Activated CD8-positive, alpha-beta memory T cell treated with anti-CD3 and anti-CD28 coated beads, Interleukin-2, amount 10 ng/mL, durations not matched to agents 7 days and 5 days (primary cell): ENCODE measurements at regions of chr10 and their contacts with region 1.

Region 1: GRCh38 chr10:100046021-100046486 is 35.6 kb downstream of the CPN1 start:
- DNase-seq: peak; percentile 85
- ATAC-seq: peak; percentile 78
- H3K4me3 Mint-ChIP-seq: no peak overlapping the region
- H3K27ac Mint-ChIP-seq: no peak overlapping the region
- H3K4me1 Mint-ChIP-seq: no peaks in the 10 kb centered on the region
- H3K27me3 Mint-ChIP-seq: peaks cover 7% of the 10 kb centered on the region

Region 2: DNA sequence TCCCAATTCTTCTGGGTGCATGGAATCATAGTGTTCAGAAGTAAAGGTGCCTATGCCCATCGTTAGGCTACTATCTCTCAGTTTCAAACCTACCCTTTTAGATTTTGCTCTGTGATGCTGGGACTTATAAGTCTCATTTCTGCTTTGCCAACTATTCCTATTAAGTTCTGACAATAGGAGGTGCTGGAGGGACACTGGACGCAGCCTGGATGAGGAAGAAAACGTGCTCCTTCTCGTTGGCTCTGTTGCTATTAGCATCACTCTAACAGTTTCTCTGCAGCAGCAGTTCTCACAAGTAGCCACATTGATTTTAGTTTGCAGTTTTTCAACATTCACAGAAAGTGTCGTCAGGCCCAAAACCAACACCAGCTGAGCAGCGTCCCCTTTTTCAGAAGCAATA is 191.2 kb before region 1 on chr10:
- CTCF ChIA-PET with region 1: interaction called, 132 read pairs
- DNase-seq: no peak
- ATAC-seq: no peak
- H3K4me3 Mint-ChIP-seq: no peak overlapping the region
- H3K27ac Mint-ChIP-seq: no peak overlapping the region
- H3K4me1 Mint-ChIP-seq: no peaks in the 10 kb centered on the region
- H3K27me3 Mint-ChIP-seq: peaks cover 16% of the 10 kb centered on the region